ENCODE measurements at regions of chr13 and their contacts with region 1.

Region 1: DNA sequence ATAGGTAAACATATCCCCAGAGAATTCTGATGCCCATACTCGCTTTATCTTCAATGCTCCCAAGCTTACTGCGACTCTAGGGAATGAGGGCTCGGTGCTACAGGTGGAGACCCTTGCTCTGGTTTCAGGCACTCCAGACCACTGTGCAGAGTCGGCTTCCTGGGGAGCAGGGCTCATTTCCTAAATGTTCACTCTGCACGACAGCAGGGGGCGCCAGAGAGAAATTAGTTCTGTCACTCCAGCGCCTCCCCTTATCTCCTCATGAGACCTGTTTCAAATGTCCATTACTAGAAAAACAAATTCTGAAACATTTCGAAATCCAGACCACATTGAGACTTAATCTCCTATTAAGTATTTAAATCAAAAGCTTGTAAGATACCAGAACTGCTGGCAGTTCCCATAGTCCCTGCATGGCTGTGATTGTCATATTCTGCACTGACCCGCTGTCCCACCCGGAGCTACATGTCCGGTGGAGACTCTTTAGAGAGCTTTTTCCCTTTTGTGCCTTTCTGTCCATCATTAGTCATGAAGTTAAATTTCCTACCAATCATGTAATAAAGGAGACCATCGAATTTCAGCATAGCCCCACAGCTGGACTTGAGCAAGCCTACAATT is 22.4 kb downstream of the EPSTI1 start:
- DNase-seq: peak; percentile 79 to 83
- ATAC-seq: peak; percentile 77 to 96 (median 90)
- H3K4me3 ChIP-seq: no peak overlapping the region
- H3K27ac ChIP-seq: no peak overlapping the region
- H3K4me1 ChIP-seq: peaks cover 0 to 33% (median 20%) of the 10 kb centered on the region in 9 donors
- H3K27me3 ChIP-seq: no peaks in the 10 kb centered on the region
- CTCF ChIP-seq: peak; percentile 70 to 89 (median 84)

Region 2: GRCh38 chr13:42907745-42908144 is 61.9 kb before region 1 on chr13:
- intact Hi-C with region 1: no loop called
- DNase-seq: no peak
- ATAC-seq: peak in 1 of 8 donors; percentile 57
- H3K4me3 ChIP-seq: no peak overlapping the region
- H3K27ac ChIP-seq: no peak overlapping the region
- H3K4me1 ChIP-seq: peaks cover 0 to 6% (median 0%) of the 10 kb centered on the region in 9 donors
- H3K27me3 ChIP-seq: no peaks in the 10 kb centered on the region
- CTCF ChIP-seq: no peak

Region 3: DNA sequence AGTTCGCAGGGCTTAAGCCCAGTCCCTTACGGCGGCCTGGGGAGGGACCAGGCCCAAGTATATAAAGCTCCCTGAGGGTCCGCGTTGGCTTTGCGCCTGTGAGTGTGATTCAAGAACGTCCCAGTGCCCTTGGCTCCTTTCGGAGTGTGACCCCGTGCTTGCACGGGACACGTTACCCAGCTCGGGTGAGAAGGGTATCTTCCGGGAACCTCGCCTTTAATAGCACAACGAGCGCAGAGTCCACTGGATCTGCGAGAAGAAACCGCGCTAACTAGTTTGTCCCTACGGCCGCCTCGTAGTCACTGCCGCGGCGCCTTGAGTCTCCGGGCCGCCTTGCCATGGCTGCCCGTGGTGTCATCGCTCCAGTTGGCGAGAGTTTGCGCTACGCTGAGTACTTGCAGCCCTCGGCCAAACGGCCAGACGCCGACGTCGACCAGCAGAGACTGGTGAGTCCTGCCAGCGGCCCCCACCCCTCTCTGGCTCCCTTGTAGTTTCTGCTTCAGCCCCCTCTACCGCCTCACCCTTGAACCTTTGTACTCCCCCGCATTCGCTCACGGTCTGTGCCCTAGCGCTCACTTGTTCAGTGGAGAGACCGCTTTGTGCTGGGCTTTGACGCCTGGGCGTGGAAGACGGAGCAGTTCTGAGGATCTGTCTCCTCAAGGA is 53.8 kb after region 1 on chr13 and contains the start of gene DNAJC15:
- intact Hi-C with region 1: loop called in 1 of 10 experiments (anchors 5 kb)
- DNase-seq: peak; percentile 86 to 93
- ATAC-seq: peak; percentile 92 to 98 (median 95)
- H3K4me3 ChIP-seq: peak within 1 kb of the TSS; percentile 57 to 78 (median 70)
- H3K27ac ChIP-seq: peak within 1 kb of the TSS; percentile 53 to 95 (median 90)
- H3K4me1 ChIP-seq: peaks cover 0 to 43% (median 23%) of the 10 kb centered on the region in 9 donors
- H3K27me3 ChIP-seq: no peaks in the 10 kb centered on the region
- CTCF ChIP-seq: peak in 5 of 9 donors; percentile 6 to 46 (median 38)
- total RNA-seq, gene DNAJC15: 16.7 to 32.1 (median 28.1) TPM

Region 4: DNA sequence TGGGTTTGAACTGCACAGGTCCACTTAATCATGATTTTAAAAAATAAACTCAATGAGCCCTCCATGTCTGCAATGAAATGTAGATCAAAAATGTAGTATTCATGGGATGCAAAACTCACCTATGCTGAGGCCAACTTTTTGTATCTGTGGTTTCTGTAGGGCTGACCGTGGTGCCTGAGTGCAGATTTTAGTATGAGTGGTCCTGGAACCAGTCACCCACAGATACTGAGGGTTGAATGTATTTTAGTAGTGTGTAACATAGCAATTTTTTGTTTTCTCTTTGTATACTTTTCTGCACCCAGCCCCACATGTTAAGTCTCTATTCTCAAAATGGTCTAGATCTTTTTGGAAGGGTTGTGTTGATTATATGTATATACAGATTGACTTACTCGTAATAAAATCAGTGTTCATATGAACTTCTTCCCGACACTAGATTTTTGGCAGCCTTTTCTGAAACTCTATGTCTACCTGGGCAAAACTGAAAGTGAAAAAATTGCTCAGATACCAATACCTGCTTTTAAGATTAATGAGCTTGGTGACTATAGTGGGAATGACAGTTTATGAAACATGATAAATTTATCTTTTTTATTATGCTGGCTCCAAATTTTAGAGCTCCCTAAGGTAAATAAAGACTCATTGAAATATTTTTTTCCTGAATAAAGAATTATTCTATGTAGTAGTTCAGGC is 105.3 kb after region 1 on chr13:
- intact Hi-C with region 1: loop called in 1 of 10 experiments (anchors 5 kb)
- DNase-seq: no peak
- ATAC-seq: no peak
- H3K4me3 ChIP-seq: no peak overlapping the region
- H3K27ac ChIP-seq: no peak overlapping the region
- H3K4me1 ChIP-seq: peaks cover 0 to 50% (median 28%) of the 10 kb centered on the region in 9 donors
- H3K27me3 ChIP-seq: no peaks in the 10 kb centered on the region
- CTCF ChIP-seq: no peak

Region 5: GRCh38 chr13:43797869-43798268 is 828.2 kb after region 1 on chr13:
- intact Hi-C with region 1: loop called in 5 of 10 experiments (anchors 5 to 10 kb)
- DNase-seq: no peak
- ATAC-seq: no peak
- H3K4me3 ChIP-seq: no peak overlapping the region
- H3K27ac ChIP-seq: no peak overlapping the region
- H3K4me1 ChIP-seq: no peaks in the 10 kb centered on the region
- H3K27me3 ChIP-seq: no peaks in the 10 kb centered on the region
- CTCF ChIP-seq: no peak

Region 6: DNA sequence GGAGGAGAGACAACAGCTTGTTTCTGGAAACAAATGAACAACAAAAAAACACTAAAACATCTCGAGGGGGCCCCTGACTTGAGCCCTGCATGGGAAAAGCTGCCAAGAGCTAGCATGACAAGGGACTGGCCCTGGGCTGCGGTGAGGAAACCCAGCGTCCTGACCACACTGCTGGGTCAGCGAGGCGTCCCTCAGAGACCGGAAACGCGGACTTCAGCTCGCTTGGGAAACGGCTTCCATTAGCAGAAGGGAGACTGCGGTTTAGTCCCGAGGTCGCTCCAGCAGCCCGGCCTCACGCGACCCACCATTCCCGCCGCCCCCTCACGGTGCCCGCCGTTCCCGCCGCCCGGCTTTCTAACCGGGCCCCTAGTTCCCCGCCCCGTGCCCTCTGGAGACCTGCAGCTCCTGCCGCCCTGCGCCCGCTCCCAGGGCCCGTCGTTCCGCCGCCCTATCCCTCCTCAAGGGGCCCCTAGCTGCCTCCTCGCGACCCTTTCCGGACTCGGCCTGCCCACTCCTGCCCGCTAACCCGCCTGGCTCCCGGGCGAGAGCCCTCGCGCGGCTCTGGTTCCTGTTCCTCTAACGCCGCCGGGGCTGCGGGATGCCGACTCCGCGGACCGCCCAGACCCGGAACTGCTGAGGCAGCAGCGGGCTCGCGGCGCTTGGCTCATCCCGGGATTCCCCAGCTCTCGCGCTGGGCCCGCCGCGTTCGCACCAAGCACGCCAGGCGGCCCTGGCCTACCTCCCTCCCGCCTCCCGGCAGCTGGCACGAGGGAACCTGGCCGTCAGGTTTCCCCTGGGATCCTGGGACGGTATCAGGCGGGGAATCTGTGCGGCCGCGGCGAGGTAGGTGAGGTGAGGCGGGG is 909.5 kb after region 1 on chr13 and contains the start of gene CCDC122:
- intact Hi-C with region 1: loop called in 5 of 10 experiments (anchors 5 to 10 kb)
- DNase-seq: peak; percentile 79 to 87
- ATAC-seq: peak; percentile 86 to 94 (median 92)
- H3K4me3 ChIP-seq: peak within 1 kb of the TSS; percentile 41 to 94 (median 87)
- H3K27ac ChIP-seq: peak within 1 kb of the TSS; percentile 85 to 99 (median 95)
- H3K4me1 ChIP-seq: peaks cover 0 to 46% (median 15%) of the 10 kb centered on the region in 9 donors
- H3K27me3 ChIP-seq: no peaks in the 10 kb centered on the region
- CTCF ChIP-seq: no peak
- total RNA-seq, gene CCDC122: 2.4 to 16.0 (median 7.3) TPM